SK-N-SH (cell line): ENCODE measurements at regions of chr5 and their contacts with region 1.

Region 1: DNA sequence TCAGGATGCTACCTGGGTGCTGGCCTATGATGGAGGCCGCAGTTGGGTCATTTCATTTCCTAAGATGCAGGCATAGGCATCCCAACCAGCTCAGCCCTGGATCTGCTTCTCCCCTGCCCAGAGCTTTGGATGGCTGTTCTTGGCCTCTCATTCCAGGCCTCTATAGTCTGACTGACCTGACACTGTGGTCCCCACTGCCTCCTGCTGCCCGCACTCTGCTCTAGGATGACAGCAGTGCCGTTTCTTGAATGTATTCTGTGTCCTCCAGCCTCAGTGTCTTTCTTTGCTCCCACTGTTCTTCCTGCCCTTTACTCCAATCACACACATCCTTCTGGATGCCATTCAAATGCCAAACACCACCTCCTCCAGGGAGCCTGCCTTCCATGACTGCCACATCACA is 235.7 kb downstream of the HSPA4 start:
- DNase-seq: peak; percentile 79
- H3K4me3 ChIP-seq: no peak overlapping the region
- H3K27ac ChIP-seq: no peak overlapping the region
- H3K4me1 ChIP-seq: no peaks in the 10 kb centered on the region; a peak in 1 of 4 replicates
- H3K27me3 ChIP-seq: no peaks in the 10 kb centered on the region
- CTCF ChIP-seq: peak; percentile 69
- EP300 ChIP-seq: no peak
- RAD21 ChIP-seq: peak; percentile 86

Region 2: DNA sequence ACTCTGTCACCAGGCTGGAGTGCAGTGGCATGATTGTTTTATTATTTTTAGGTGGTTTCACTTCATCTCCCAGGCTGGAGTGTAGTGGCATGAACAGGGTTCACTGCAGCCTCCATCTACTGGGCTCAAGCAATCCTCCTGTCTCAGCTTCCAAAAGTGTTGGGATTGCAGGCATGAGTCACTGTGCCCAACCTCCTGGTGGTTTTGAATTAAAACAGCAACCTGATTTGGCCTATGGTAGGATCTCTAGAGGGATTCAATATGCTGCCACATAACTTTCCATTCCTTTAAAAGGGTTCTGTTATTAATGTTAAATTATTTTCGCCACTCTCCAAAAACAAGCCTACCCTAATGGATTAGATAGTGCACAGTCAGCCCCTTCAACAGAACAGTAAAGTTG is 245.6 kb before region 1 on chr5:
- CTCF ChIA-PET with region 1: no interaction called
- POLR2A ChIA-PET with region 1: no interaction called
- DNase-seq: no peak
- H3K4me3 ChIP-seq: no peak overlapping the region
- H3K27ac ChIP-seq: peak overlapping the region in 1 of 2 experiments; percentile 40; a peak in 2 of 4 replicates
- H3K4me1 ChIP-seq: no peaks in the 10 kb centered on the region; a peak in 1 of 4 replicates
- H3K27me3 ChIP-seq: no peaks in the 10 kb centered on the region
- CTCF ChIP-seq: peak; percentile 25
- EP300 ChIP-seq: no peak
- RAD21 ChIP-seq: no peak

Region 3: DNA sequence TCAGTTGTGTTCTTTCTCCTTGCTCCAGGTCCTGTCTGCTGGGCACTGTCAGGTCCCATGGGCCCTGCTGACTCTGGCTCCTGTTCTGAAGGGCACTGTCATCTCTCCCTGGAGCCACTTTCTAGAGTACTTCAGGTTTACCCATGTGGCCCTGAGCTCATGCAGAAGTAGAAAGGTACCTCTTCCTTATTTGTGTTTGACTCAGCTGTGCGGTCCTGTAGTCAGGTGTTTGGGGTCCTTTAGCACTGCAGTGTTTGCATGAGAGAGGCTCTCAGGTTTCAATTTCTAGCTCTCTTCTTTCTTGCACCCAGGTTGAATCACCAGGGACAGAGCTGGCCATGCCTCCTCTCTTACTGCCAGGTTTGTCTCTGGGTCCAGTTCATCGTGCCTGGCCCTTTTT is 164.2 kb before region 1 on chr5:
- CTCF ChIA-PET with region 1: interaction called, 19 read pairs
- POLR2A ChIA-PET with region 1: no interaction called
- DNase-seq: no peak
- H3K4me3 ChIP-seq: no peak overlapping the region
- H3K27ac ChIP-seq: no peak overlapping the region
- H3K4me1 ChIP-seq: no peaks in the 10 kb centered on the region
- H3K27me3 ChIP-seq: no peaks in the 10 kb centered on the region; the same call in 1 of the 2 replicates
- CTCF ChIP-seq: no peak
- EP300 ChIP-seq: no peak
- RAD21 ChIP-seq: no peak

Region 4: DNA sequence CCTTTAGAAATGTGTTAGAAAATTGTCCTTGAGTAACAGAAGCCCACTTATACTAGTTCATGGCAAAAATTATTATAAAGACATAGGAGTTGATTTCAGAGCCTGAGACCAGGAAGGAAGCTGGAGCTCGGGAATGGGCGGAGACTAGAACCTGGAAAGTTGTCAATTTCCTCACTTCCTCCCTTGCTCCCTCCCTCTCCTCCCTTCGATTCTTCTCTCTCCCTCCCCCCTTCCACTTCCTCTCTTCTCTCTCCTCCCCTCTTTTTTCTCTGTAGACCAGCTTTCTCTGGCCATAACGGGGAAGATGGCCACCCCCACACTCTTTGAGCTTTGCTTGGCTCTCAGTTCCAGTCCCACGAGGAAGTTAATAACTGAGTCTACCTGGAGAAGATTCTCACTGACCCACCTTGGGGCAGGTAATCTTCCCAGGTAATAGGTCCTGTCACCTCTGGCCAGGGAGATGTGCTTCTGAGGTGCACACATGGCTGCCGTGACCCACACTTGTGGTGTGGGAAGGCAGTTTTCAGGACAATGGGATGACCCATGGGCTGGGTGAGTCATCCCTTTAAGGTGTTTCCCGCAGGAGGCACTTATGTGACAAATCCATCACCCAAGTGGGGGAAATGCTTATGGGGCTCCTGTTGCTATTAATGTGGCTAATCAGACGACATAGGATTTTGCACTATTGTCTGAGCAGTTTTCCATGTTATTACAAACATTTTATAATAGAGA is 156.9 kb before region 1 on chr5:
- CTCF ChIA-PET with region 1: interaction called, 10 read pairs
- POLR2A ChIA-PET with region 1: no interaction called
- DNase-seq: no peak
- H3K4me3 ChIP-seq: no peak overlapping the region
- H3K27ac ChIP-seq: no peak overlapping the region
- H3K4me1 ChIP-seq: peaks cover 0 to 12% of the 10 kb centered on the region in 2 experiments; a peak in 2 of 4 replicates
- H3K27me3 ChIP-seq: no peaks in the 10 kb centered on the region; the same call in 1 of the 2 replicates
- CTCF ChIP-seq: no peak
- EP300 ChIP-seq: no peak
- RAD21 ChIP-seq: no peak

Region 5: GRCh38 chr5:133247881-133248624 is 39.4 kb before region 1 on chr5:
- CTCF ChIA-PET with region 1: interaction called, 23 read pairs
- POLR2A ChIA-PET with region 1: no interaction called
- DNase-seq: peak; percentile 73
- H3K4me3 ChIP-seq: no peak overlapping the region
- H3K27ac ChIP-seq: no peak overlapping the region
- H3K4me1 ChIP-seq: peaks cover 0 to 26% of the 10 kb centered on the region in 2 experiments; a peak in 1 of 4 replicates
- H3K27me3 ChIP-seq: no peaks in the 10 kb centered on the region
- CTCF ChIP-seq: peak; percentile 61
- EP300 ChIP-seq: no peak
- RAD21 ChIP-seq: peak; percentile 76

Region 6: DNA sequence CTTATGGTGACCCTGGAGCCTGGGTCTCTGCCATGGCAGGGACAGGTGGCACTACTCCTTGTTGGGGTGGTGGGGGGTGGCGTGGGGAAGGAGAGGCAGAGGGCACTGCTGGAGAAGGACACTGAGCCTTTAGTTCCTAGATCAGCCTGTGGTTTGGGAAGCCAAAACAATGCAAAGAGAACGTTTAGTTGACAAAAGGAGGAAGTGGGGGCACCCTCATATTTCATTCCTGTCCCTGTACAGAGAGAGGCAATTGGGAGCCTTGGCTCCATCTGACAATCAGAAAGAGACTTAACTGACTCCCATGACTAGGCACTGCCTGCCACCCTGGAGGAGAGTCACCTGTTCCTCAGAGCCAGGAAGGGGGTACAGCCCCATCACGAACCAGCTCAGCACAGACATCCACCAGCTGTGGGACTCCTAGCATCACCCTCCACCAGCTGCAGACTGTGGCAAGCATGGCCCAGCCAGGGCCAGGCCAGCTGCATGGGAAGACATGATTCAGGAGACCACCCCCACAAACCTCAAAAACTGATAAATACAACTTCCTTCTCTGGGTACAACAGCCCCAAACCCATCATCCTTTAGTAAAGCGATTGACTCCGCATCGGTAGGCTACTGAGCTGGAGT is 21.8 kb after region 1 on chr5:
- CTCF ChIA-PET with region 1: interaction called, 14 read pairs
- POLR2A ChIA-PET with region 1: no interaction called
- DNase-seq: no peak
- H3K4me3 ChIP-seq: no peak overlapping the region
- H3K27ac ChIP-seq: no peak overlapping the region
- H3K4me1 ChIP-seq: peaks cover 0 to 5% of the 10 kb centered on the region in 2 experiments; a peak in 1 of 4 replicates
- H3K27me3 ChIP-seq: peaks cover 14% of the 10 kb centered on the region; the same call in 1 of the 2 replicates
- CTCF ChIP-seq: no peak
- EP300 ChIP-seq: no peak
- RAD21 ChIP-seq: no peak